ENCODE measurements at regions of chr10 and their contacts with region 1.

Region 1: GRCh38 chr10:6678211-6678803 is 98.2 kb upstream of the PRKCQ start:
- DNase-seq: peak; percentile 89
- H3K4me3 Mint-ChIP-seq: no peak overlapping the region
- H3K27ac Mint-ChIP-seq: no peak overlapping the region
- H3K4me1 Mint-ChIP-seq: peaks cover 9% of the 10 kb centered on the region
- H3K27me3 Mint-ChIP-seq: peaks cover 57% of the 10 kb centered on the region

Region 2: DNA sequence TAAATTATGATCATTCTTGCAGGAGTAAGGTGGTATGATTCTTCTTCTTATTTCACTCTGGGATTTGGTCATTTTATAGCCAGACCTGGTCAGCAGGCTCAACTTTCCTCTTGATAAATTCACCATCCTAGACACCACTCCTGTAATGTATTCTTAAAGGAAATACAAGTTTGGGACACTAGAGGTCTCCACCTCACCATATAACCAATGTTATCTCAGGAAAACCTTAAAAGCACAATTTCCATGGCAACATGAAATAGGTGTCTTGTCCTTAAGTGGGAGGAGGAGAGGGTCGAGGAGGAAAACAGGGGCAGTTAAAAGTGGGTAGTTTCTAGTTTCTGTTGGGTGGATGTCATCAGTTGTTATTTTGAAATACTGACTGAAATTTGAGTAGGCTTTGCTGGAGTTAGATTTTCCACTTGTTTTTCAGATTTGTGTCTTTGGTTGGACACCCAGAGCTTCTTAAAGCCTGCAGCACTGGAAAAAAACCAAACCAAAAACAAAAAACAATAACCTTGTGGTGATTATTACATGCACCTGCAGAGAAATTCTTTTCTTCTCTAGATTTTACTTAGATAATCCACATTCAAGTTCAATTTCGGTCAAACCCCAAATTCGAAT is 261.3 kb before region 1 on chr10:
- intact Hi-C with region 1: loop called (anchors 1 kb)
- DNase-seq: peak; percentile 79
- H3K4me3 Mint-ChIP-seq: no peak overlapping the region
- H3K27ac Mint-ChIP-seq: no peak overlapping the region
- H3K4me1 Mint-ChIP-seq: peaks cover 7% of the 10 kb centered on the region
- H3K27me3 Mint-ChIP-seq: no peaks in the 10 kb centered on the region

Measured in activated CD4-positive, alpha-beta T cell treated with anti-CD3 and anti-CD28 coated beads, Interleukin-2, amount 10 ng/mL, durations not matched to agents 24 days and 14 days (primary cell).